BJ (cell line): ENCODE measurements at regions of chr4 and their contacts with region 1.

Region 1: DNA sequence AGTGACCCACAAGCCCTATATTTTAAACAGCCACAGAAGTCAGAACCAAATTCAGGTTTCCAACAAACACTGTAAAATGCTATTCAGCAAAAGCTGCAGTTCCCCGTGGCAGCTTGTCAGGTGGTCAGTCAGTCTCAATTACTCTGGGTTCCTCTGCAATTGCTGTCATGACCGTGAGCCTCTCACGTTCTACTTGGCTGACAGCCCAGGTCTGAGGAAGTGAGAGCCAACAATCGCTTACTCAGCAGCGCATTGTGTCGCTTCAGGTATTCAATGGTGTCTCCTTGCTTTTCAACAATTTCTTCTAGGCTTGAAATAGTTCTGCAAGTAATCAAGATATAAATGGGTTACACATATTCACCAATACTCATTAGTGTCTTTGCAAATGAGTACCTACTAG is 25.8 kb downstream of the TRIM75 start:
- DNase-seq: no peak
- H3K4me3 ChIP-seq: no peak overlapping the region
- H3K27me3 ChIP-seq: no peaks in the 10 kb centered on the region
- CTCF ChIP-seq: no peak

Region 2: DNA sequence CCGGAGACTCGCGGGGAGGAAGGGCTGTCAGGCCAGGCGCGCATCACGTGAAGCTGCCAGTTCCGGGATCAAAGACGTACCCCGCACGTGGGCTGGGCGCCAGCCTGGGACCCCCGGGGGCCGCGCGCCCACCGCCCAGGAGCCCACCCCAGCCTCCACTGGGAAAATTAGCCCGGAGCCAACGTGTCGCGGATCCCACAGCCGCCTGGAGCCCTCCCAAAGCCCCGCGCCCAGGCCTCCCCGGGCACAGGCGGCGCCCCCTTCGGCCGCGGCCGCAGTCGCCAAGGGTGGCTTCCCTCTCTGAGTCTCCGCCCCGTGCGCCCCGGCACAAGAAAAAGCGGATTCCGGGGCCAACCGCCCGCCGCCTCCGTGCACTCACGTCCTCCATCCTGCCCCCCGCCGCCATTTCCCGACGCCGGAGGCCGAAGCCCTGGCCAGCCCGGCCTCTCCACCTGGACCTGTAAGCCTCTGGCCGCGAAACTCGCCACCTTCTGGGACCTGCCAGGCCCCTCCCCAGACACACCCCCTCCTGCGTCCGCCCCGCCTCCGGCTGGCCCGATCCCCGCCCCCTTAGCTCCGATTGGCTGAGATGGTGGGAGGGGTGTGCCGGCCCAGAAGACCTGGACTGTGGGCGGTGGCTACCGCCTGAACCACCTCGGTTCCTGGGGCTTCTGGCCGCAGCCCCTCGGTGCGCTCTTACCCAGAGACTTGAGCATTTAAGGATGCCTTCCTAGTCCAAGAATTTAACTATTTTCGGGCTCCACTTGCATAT is 33.1 kb after region 1 on chr4 and contains the start of gene TMEM192:
- CTCF ChIA-PET with region 1: interaction called, 3 read pairs
- POLR2A ChIA-PET with region 1: interaction called, 12 read pairs
- DNase-seq: peak; percentile 61
- H3K4me3 ChIP-seq: peak within 1 kb of the TSS; percentile 98
- H3K27me3 ChIP-seq: no peaks in the 10 kb centered on the region
- CTCF ChIP-seq: no peak
- polyA plus RNA-seq, gene TMEM192: 11.1 and 19.3 TPM in 2 replicates

Region 3: DNA sequence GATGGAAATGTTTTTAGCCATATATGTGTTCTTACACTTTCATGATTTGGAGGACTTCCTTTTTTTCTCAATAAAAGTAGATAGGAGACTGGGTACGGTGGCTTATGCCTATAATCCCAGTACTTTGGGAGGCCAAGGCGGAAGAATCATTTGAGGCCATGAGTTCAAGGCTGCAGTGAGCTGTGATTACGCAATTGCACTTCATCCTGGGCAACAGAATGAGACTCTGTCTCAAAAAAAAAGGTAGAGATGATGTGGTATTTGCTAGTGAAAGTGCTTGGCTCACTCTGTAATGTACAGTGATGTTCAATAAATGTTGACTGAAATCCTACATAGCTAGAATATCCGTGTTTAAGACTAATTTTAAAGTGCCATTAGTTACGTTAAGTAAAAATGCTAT is 155.3 kb after region 1 on chr4:
- CTCF ChIA-PET with region 1: no interaction called
- POLR2A ChIA-PET with region 1: no interaction called
- DNase-seq: no peak
- H3K4me3 ChIP-seq: no peak overlapping the region
- H3K27me3 ChIP-seq: no peaks in the 10 kb centered on the region
- CTCF ChIP-seq: no peak

Region 4: GRCh38 chr4:165343353-165344191 is 264.1 kb after region 1 on chr4:
- CTCF ChIA-PET with region 1: no interaction called
- POLR2A ChIA-PET with region 1: interaction called, 10 read pairs
- DNase-seq: no peak
- H3K4me3 ChIP-seq: no peak overlapping the region
- H3K27me3 ChIP-seq: no peaks in the 10 kb centered on the region
- CTCF ChIP-seq: no peak